Dendritic cell treated with granulocyte-macrophage colony-stimulating factor and Interleukin-4, amounts not matched to agents 40 ng/mL and 50 ng/mL, for 4 days (primary cell): ENCODE measurements at regions of chr17 and their contacts with region 1.

Region 1: GRCh38 chr17:68613739-68614298 is 12.7 kb upstream of the FAM20A start:
- H3K4me3 Mint-ChIP-seq: no peak overlapping the region
- H3K27ac Mint-ChIP-seq: no peak overlapping the region
- H3K4me1 Mint-ChIP-seq: peaks cover 21% of the 10 kb centered on the region
- H3K27me3 Mint-ChIP-seq: peaks cover 4% of the 10 kb centered on the region

Region 2: DNA sequence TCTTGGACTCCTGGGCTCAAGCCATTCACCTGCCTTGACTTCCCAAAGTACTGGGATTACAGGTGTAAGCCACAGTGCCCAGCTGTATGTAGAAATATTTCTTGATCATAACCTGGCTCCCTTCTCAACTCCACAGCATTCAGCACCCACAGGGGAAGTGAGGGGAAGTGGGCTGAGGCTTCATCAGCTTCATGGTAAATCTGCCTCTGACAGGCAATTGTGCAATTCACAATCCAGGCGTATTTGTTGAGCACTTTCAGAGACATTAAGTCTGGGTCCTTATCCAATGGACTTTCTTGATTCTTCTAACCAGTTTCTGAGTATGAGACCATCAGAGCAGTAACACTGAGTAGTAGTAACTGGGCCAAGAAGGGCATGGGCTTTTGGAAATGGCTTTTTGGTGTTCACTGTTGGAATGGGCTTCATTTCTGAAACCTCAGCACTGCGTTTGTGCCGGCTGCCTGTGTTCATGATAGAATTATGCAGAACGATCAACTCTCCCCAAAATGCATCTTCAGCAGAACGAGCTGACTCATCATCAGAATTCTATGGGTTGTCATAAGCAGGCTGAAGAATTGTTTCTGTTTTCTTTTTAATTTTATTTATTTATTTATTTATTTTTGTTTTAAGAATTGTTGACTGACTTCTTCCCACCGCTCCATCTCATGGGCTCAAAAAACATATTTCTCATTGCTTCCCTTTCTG is 41.5 kb before region 1 on chr17:
- intact Hi-C with region 1: loop called (anchors 5 kb)
- H3K4me3 Mint-ChIP-seq: no peak overlapping the region
- H3K27ac Mint-ChIP-seq: peak overlapping the region; percentile 35
- H3K4me1 Mint-ChIP-seq: peaks cover 35% of the 10 kb centered on the region
- H3K27me3 Mint-ChIP-seq: peaks cover 5% of the 10 kb centered on the region

Region 3: GRCh38 chr17:68627956-68628575 is 14.2 kb after region 1 on chr17:
- intact Hi-C with region 1: no loop called
- H3K4me3 Mint-ChIP-seq: no peak overlapping the region
- H3K27ac Mint-ChIP-seq: no peak overlapping the region
- H3K4me1 Mint-ChIP-seq: peaks cover 11% of the 10 kb centered on the region
- H3K27me3 Mint-ChIP-seq: peaks cover 3% of the 10 kb centered on the region

Region 4: DNA sequence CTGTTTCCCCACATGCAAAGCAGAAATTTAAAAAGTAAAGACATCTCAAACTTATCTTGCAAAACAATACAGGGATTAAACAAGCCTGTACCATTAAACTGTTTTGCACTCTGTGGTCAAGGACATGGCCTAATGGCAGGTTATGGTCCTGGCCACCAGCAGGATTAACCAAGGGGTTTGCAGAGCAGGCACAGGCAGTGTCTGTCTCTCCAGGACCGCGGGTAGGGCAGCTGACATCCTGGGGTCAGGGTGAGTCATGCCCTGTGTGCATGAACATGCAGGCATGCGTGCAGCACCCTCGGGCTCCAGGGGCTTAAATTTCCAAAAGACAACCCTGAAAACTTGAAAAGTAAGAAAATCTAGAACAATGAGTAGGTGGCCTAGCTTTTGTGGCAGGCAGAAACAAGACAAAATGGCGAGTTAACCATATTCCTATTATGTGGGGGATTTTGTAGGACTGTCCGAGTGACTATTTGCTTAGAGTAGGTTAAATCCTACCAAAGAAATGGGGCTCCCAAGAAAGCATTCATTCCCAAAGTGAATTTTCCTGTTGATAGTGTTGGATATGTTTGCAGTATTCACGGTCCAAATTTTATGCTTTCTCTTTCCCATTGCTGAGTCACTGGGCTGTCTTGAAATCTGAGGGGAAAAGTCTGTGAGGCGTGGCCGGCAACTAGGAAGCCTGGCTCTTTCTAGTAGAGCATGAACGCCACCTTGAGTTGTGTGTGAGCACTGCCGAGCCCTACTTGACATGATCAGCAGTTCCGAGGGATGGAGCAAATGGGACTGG is 145.7 kb after region 1 on chr17:
- intact Hi-C with region 1: loop called (anchors 10 kb)
- H3K4me3 Mint-ChIP-seq: peak overlapping the region; percentile 79
- H3K27ac Mint-ChIP-seq: peak overlapping the region; percentile 95
- H3K4me1 Mint-ChIP-seq: peaks cover 15% of the 10 kb centered on the region
- H3K27me3 Mint-ChIP-seq: no peaks in the 10 kb centered on the region